Naive thymus-derived CD4-positive, alpha-beta T cell (primary cell): ENCODE measurements at regions of chr17 and their contacts with region 1.

Region 1: DNA sequence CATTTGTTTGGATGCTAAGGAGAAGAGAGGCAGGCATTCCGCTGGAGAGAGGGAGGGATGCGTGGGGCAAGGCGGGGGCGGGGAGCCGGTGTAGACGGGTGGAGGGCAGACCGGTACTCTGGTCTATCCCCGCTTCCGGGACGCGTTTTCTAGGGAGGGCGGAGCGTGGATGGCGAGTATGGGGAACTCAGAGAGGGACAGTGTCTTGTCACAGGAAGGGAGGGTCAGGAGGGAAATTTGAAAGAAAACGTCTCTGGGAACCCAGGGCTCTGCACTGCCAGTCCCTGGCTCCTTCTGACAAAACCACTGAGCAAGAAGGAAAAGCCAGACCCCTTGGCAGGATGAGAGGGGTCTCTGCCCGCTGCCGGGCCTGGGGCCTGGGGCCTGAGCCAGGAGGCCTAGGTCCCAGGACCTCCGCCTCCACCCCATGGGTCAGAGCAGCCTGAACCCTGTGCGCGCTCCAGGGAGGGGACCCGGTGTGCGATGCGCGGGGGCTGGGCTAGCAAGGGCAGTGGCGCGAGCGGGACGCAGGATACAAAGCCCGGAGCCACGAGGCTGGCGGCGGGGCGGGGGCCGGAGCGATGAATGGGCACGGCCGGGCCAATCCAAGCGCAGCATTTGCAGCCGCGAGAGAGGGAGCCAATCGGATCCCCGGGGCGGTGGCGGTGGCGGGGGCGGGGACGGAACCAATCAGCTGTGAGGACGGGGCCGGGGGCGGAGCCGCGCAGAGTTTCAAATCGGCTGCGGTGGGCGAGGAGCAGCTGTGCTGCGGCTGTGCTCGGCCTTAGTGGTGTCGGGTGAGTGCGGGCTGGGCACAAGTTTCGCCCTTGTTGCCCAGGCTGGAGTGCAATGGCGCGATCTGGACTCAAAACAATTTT is at the start of gene PIMREG:
- DNase-seq: peak; percentile 74 to 93 (median 84)
- ATAC-seq: peak; percentile 98
- H3K4me3 ChIP-seq: peak within 1 kb of the TSS; percentile 77
- H3K4me3 Mint-ChIP-seq: peak within 1 kb of the TSS; percentile 85 to 98 (median 92)
- H3K27ac ChIP-seq: peak within 1 kb of the TSS; percentile 56
- H3K27ac Mint-ChIP-seq: peak within 1 kb of the TSS in 8 of 9 donors; percentile 63 to 93 (median 84)
- H3K4me1 ChIP-seq: peaks cover 5 to 6% of the 10 kb centered on the region in 2 donors
- H3K4me1 Mint-ChIP-seq: peaks cover 10 to 15% (median 13%) of the 10 kb centered on the region in 7 donors
- H3K27me3 ChIP-seq: no peaks in the 10 kb centered on the region
- H3K27me3 Mint-ChIP-seq: peaks cover 0 to 39% (median 0%) of the 10 kb centered on the region in 5 donors
- total RNA-seq, gene PIMREG: 0.49 to 18.6 TPM in 2 of 5 experiments, not detected in the others

Region 2: DNA sequence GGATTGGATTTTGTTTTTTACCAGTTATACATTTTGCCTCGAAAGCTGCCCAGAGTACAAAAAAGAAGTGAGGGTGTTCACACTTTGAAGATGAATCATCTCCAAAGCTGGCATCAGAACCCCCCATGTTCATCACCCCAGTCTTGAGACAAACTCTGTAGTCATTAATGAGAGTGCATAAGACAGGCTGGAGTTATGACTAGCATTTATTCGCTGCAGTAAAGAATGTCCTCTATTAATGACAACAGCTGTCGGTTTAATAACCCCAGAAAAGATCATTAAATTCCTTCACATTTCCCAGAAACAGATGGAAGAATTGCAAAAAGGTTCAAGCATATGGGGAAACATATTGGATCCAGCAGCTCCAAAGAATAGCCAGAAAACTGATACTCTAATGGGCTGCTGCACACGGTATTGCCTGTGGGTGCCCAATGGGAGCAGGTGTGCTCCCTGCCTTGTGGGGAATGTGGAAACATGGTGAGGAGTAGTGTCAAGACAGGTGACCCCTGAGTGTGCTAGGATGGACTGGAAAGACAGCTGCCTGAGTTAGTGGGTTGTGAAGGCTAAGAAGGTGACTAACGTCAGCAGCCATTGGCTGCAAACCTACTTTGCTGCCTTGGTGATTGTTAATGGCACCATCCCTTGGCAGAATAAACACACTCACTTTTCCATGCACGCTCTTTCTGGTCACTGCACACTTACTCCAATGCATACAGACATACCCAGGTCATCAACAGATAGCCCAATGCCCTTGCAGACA is 91.0 kb before region 1 on chr17:
- CTCF ChIA-PET with region 1: no interaction called
- POLR2A ChIA-PET with region 1: no interaction called
- intact Hi-C with region 1: no loop called
- DNase-seq: no peak
- ATAC-seq: no peak
- H3K4me3 ChIP-seq: no peak overlapping the region
- H3K4me3 Mint-ChIP-seq: no peak overlapping the region
- H3K27ac ChIP-seq: no peak overlapping the region
- H3K27ac Mint-ChIP-seq: no peak overlapping the region
- H3K4me1 ChIP-seq: no peaks in the 10 kb centered on the region
- H3K4me1 Mint-ChIP-seq: no peaks in the 10 kb centered on the region
- H3K27me3 ChIP-seq: peaks cover 0 to 4% of the 10 kb centered on the region in 2 donors
- H3K27me3 Mint-ChIP-seq: peaks cover 17 to 55% (median 43%) of the 10 kb centered on the region in 5 donors

Region 3: GRCh38 chr17:6413065-6413464 is 30.9 kb before region 1 on chr17:
- CTCF ChIA-PET with region 1: no interaction called
- POLR2A ChIA-PET with region 1: no interaction called
- intact Hi-C with region 1: no loop called
- DNase-seq: no peak
- ATAC-seq: peak; percentile 47
- H3K4me3 ChIP-seq: no peak overlapping the region
- H3K4me3 Mint-ChIP-seq: no peak overlapping the region
- H3K27ac ChIP-seq: no peak overlapping the region
- H3K27ac Mint-ChIP-seq: no peak overlapping the region
- H3K4me1 ChIP-seq: no peaks in the 10 kb centered on the region
- H3K4me1 Mint-ChIP-seq: no peaks in the 10 kb centered on the region
- H3K27me3 ChIP-seq: no peaks in the 10 kb centered on the region
- H3K27me3 Mint-ChIP-seq: peaks cover 4 to 11% (median 5%) of the 10 kb centered on the region in 5 donors

Region 4: DNA sequence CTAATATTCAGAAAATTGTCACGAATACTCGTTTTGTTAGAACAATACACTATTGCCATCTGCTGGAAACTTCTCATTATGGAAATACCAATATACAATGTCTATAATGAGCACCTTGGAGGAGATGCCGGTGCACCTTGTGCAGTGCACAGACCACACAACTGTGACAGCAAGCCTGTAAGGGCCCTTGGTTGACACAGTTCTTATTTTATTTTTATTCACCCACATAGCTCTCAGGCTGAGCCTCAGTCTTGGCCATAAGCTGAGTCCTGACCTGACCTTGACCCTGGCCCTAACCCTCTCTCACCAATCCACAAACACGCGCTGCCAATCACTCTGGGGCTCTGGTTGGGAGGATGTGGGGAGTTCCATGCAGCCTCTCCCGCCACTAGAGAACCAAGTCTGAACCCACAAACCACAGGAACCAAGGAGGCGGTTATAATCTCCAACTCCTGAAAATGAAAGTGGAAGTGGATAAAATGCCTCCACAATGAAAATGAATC is 16.6 kb before region 1 on chr17:
- CTCF ChIA-PET with region 1: interaction called, 3 read pairs
- POLR2A ChIA-PET with region 1: interaction called, 3 read pairs
- intact Hi-C with region 1: loop called in 1 of 2 experiments (anchors 1 kb)
- DNase-seq: peak in 8 of 9 donors; percentile 47 to 73 (median 62)
- ATAC-seq: peak; percentile 85
- H3K4me3 ChIP-seq: no peak overlapping the region
- H3K4me3 Mint-ChIP-seq: peak overlapping the region in 9 of 10 donors; percentile 36 to 77 (median 63)
- H3K27ac ChIP-seq: no peak overlapping the region
- H3K27ac Mint-ChIP-seq: peak overlapping the region in 8 of 9 donors; percentile 7 to 90 (median 78)
- H3K4me1 ChIP-seq: peaks cover 4 to 15% of the 10 kb centered on the region in 2 donors
- H3K4me1 Mint-ChIP-seq: peaks cover 11 to 19% (median 17%) of the 10 kb centered on the region in 7 donors
- H3K27me3 ChIP-seq: no peaks in the 10 kb centered on the region
- H3K27me3 Mint-ChIP-seq: peaks cover 0 to 78% (median 5%) of the 10 kb centered on the region in 5 donors

Region 5: GRCh38 chr17:6454957-6455705 is 11.2 kb after region 1 on chr17:
- CTCF ChIA-PET with region 1: interaction called, 3 read pairs
- POLR2A ChIA-PET with region 1: interaction called, 9 read pairs
- intact Hi-C with region 1: loop called in 1 of 2 experiments (anchors 1 kb)
- DNase-seq: peak in 7 of 9 donors; percentile 33 to 62 (median 60)
- ATAC-seq: peak; percentile 87
- H3K4me3 ChIP-seq: peak overlapping the region; percentile 27
- H3K4me3 Mint-ChIP-seq: peak overlapping the region; percentile 33 to 81 (median 68)
- H3K27ac ChIP-seq: peak overlapping the region; percentile 63
- H3K27ac Mint-ChIP-seq: peak overlapping the region in 7 of 9 donors; percentile 73 to 91 (median 82)
- H3K4me1 ChIP-seq: peaks cover 0 to 8% of the 10 kb centered on the region in 2 donors
- H3K4me1 Mint-ChIP-seq: peaks cover 6 to 34% (median 27%) of the 10 kb centered on the region in 7 donors
- H3K27me3 ChIP-seq: no peaks in the 10 kb centered on the region
- H3K27me3 Mint-ChIP-seq: peaks cover 0 to 27% (median 0%) of the 10 kb centered on the region in 5 donors

Region 6: GRCh38 chr17:6465206-6466003 is 21.5 kb after region 1 on chr17:
- CTCF ChIA-PET with region 1: no interaction called
- POLR2A ChIA-PET with region 1: no interaction called
- intact Hi-C with region 1: no loop called
- DNase-seq: no peak
- ATAC-seq: no peak
- H3K4me3 ChIP-seq: no peak overlapping the region
- H3K4me3 Mint-ChIP-seq: no peak overlapping the region
- H3K27ac ChIP-seq: no peak overlapping the region
- H3K27ac Mint-ChIP-seq: peak overlapping the region in 1 of 9 donors; percentile 4
- H3K4me1 ChIP-seq: no peaks in the 10 kb centered on the region
- H3K4me1 Mint-ChIP-seq: peaks cover 0 to 13% (median 3%) of the 10 kb centered on the region in 7 donors
- H3K27me3 ChIP-seq: no peaks in the 10 kb centered on the region
- H3K27me3 Mint-ChIP-seq: peaks cover 0 to 6% (median 3%) of the 10 kb centered on the region in 5 donors

Region 7: GRCh38 chr17:6761779-6762178 is 317.8 kb after region 1 on chr17:
- CTCF ChIA-PET with region 1: no interaction called
- POLR2A ChIA-PET with region 1: no interaction called
- intact Hi-C with region 1: no loop called
- DNase-seq: no peak
- ATAC-seq: no peak
- H3K4me3 ChIP-seq: no peak overlapping the region
- H3K4me3 Mint-ChIP-seq: no peak overlapping the region
- H3K27ac ChIP-seq: no peak overlapping the region
- H3K27ac Mint-ChIP-seq: no peak overlapping the region
- H3K4me1 ChIP-seq: peaks cover 11 to 16% of the 10 kb centered on the region in 2 donors
- H3K4me1 Mint-ChIP-seq: peaks cover 19 to 72% (median 27%) of the 10 kb centered on the region in 7 donors
- H3K27me3 ChIP-seq: no peaks in the 10 kb centered on the region
- H3K27me3 Mint-ChIP-seq: no peaks in the 10 kb centered on the region